ENCODE measurements at regions of chr16 and their contacts with region 1.

Region 1: GRCh38 chr16:11175787-11176341 is 80.1 kb downstream of the SOCS1 start:
- H3K4me3 Mint-ChIP-seq: no peak overlapping the region
- H3K27ac Mint-ChIP-seq: peak overlapping the region; percentile 90
- H3K4me1 Mint-ChIP-seq: peaks cover 85% of the 10 kb centered on the region
- H3K27me3 Mint-ChIP-seq: no peaks in the 10 kb centered on the region

Region 2: DNA sequence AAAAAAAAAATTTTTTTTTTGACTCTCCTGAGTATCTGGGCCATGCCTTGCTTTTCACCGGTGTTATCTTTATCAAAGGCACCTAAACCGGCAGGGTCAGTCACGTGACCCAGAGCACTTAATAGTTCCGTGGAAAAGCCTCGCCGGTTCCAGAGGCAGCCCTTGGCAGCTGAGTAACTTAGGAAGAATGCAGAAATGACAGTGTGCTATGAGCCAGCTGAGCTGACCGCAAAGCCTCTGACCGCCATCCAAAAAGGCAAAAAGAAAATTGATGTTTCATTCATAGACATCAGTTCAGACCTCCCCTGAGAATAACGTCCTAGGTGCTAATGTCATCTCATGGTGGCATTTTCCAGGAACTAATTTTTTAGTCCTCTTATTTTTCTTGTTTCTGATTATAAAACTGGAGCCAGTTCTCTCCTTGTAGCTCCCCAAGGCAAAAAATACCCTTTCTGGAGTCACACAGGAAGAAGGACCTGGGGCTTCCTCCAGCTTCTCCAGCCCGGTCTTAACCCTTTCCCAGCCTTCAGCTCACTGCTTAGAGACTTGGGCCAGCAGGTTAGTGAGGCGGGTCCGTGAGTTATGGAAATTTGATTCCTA is 42.4 kb before region 1 on chr16:
- intact Hi-C with region 1: loop called (anchors 5 kb)
- H3K4me3 Mint-ChIP-seq: peak overlapping the region; percentile 23
- H3K27ac Mint-ChIP-seq: peak overlapping the region; percentile 97
- H3K4me1 Mint-ChIP-seq: peaks cover 97% of the 10 kb centered on the region
- H3K27me3 Mint-ChIP-seq: no peaks in the 10 kb centered on the region

Measured in dendritic cell treated with granulocyte-macrophage colony-stimulating factor and Interleukin-4, amounts not matched to agents 40 ng/mL and 50 ng/mL, for 4 days (primary cell).